Testis (tissue), 5 donors: ENCODE measurements at regions of chr17 and their contacts with region 1.

Region 1: DNA sequence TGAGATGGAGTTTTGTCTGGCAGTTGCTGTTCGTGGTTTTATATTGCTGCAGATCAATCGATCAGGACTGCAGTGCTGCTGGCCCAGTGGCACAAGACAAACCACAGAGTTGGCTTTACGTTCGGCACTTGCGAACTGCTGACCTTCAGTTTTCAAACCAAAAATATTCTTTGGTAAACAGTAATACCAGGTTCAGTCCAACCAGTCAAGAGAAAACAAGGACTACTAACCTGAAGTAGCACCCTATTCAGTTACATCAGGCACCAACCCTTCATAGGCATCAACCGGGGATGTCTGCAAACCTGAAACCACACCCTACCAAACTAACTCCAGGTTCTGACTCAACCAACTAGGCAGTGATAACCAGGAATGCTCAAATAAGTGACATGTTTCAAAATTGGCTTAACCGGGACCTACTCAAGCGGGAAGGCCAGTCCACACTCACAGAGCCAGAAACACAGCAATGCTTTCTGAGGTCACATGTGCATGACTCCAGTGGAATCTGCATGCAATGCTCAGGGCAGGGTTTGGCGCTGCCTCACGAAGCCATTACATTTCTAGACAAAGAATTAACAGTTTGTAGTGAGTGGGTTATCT is 91.1 kb downstream of the SMG6 start:
- DNase-seq: peak; percentile 46
- H3K4me3 ChIP-seq: no peak overlapping the region
- H3K27ac ChIP-seq: peak overlapping the region; percentile 71 to 81
- H3K4me1 ChIP-seq: peaks cover 36% of the 10 kb centered on the region
- H3K27me3 ChIP-seq: no peaks in the 10 kb centered on the region
- CTCF ChIP-seq: no peak
- POLR2A ChIP-seq: no peak

Region 2: GRCh38 chr17:2181897-2182448 is 30.5 kb before region 1 on chr17:
- intact Hi-C with region 1: loop called (anchors 2 kb)
- DNase-seq: no peak
- H3K4me3 ChIP-seq: no peak overlapping the region
- H3K27ac ChIP-seq: peak overlapping the region; percentile 21 to 62
- H3K4me1 ChIP-seq: peaks cover 65% of the 10 kb centered on the region
- H3K27me3 ChIP-seq: no peaks in the 10 kb centered on the region
- CTCF ChIP-seq: no peak
- POLR2A ChIP-seq: no peak